Endothelial cell of umbilical vein (primary cell): ENCODE measurements at regions of chrX and their contacts with region 1.

Region 1: GRCh38 chrX:102950908-102951866 is 14.1 kb downstream of the RAB40AL start:
- DNase-seq: peak; percentile 68
- H3K4me3 ChIP-seq: peak overlapping the region in 1 of 3 experiments; percentile 35
- H3K27ac ChIP-seq: no peak overlapping the region
- H3K4me1 ChIP-seq: peaks cover 4% of the 10 kb centered on the region
- H3K27me3 ChIP-seq: no peaks in the 10 kb centered on the region
- CTCF ChIP-seq: peak; percentile 48 to 57
- POLR2A ChIP-seq: no peak

Region 2: GRCh38 chrX:102067966-102068708 is 883.0 kb before region 1 on chrX:
- CTCF ChIA-PET with region 1: interaction called, 14 read pairs
- POLR2A ChIA-PET with region 1: no interaction called
- dilution Hi-C with region 1: no loop called
- intact Hi-C with region 1: no loop called
- DNase-seq: peak; percentile 17
- H3K4me3 ChIP-seq: no peak overlapping the region
- H3K27ac ChIP-seq: no peak overlapping the region
- H3K4me1 ChIP-seq: no peaks in the 10 kb centered on the region
- H3K27me3 ChIP-seq: no peaks in the 10 kb centered on the region
- CTCF ChIP-seq: peak in 1 of 2 donors; percentile 26
- POLR2A ChIP-seq: no peak

Region 3: GRCh38 chrX:102934624-102935023 is 16.6 kb before region 1 on chrX:
- CTCF ChIA-PET with region 1: interaction called, 34 read pairs
- POLR2A ChIA-PET with region 1: no interaction called
- dilution Hi-C with region 1: no loop called
- intact Hi-C with region 1: loop called (anchors 2 kb)
- DNase-seq: peak; percentile 18
- H3K4me3 ChIP-seq: no peak overlapping the region
- H3K27ac ChIP-seq: no peak overlapping the region
- H3K4me1 ChIP-seq: no peaks in the 10 kb centered on the region
- H3K27me3 ChIP-seq: no peaks in the 10 kb centered on the region
- CTCF ChIP-seq: peak; percentile 43 to 52
- POLR2A ChIP-seq: no peak

Region 4: GRCh38 chrX:103157496-103158320 is 206.5 kb after region 1 on chrX:
- CTCF ChIA-PET with region 1: interaction called, 15 read pairs
- POLR2A ChIA-PET with region 1: no interaction called
- dilution Hi-C with region 1: no loop called
- intact Hi-C with region 1: loop called (anchors 1 kb)
- DNase-seq: peak; percentile 58
- H3K4me3 ChIP-seq: no peak overlapping the region
- H3K27ac ChIP-seq: no peak overlapping the region
- H3K4me1 ChIP-seq: peaks cover 2% of the 10 kb centered on the region
- H3K27me3 ChIP-seq: no peaks in the 10 kb centered on the region
- CTCF ChIP-seq: peak; percentile 33 to 34
- POLR2A ChIP-seq: no peak

Region 5: DNA sequence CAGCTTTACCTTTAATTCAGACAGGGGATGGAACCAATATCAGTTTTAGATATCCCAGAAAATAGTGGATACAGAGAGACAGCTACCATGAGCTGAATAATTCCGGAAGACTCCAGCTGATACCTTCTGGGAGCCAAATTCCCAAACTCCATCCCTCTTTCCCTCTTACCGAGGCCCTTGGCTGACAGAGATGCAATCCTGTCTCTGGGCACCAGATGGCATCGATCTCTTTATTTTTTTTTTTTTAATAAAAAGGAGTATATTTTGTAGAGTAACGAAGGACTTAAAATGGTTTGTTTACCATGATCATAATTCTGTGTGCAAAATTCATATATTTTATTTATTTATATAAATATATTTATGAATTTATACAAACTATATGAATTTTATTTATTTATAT is 537.1 kb after region 1 on chrX:
- CTCF ChIA-PET with region 1: interaction called, 10 read pairs
- POLR2A ChIA-PET with region 1: no interaction called
- dilution Hi-C with region 1: no loop called
- intact Hi-C with region 1: no loop called
- DNase-seq: peak; percentile 6
- H3K4me3 ChIP-seq: no peak overlapping the region
- H3K27ac ChIP-seq: no peak overlapping the region
- H3K4me1 ChIP-seq: no peaks in the 10 kb centered on the region
- H3K27me3 ChIP-seq: no peaks in the 10 kb centered on the region
- CTCF ChIP-seq: peak; percentile 7 to 25
- POLR2A ChIP-seq: no peak